Activated CD8-positive, alpha-beta T cell treated with anti-CD3 and anti-CD28 coated beads for 36 hours (primary cell): ENCODE measurements at regions of chr1 and their contacts with region 1.

Region 1: DNA sequence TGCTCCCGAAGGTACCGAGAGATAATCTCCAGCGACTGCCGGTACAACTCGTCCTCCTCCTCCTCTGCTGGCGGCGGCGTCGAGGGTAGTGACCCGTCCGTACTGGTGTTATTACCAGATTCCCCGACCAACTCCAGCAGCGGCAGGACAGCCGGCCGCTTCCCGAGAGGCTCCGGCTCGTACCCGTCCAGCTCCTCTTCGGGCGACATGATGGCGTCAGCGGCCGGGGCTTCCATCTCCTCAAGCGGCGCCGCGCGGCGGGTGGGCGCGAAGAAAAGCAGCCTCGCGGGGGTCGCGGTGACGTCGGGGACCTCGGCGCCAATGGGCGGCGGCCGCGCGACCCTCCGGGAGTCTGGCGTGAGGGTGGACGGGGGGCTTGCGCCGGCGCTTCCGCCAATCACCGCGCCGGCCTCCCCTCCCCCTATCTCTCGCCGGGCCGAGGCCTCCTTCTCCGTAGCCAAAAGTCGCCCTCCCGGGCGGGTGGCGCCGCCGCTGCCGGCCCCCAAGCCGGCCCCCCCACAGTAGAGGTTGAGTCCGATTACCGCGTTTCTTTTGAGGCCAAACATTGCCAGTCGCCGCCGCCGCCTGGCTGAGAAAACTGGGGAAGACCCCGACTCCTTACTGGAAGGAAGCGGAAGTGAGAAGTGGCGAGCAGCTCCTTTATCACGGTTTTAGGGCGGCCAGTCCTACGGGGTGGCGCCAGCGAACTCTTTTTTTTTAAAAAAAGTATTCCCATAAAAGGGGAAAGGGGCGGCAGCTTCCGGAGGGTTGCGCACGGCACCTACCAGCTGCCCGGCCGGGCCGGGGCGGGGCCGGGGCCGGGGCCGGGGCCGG is at the start of gene MCL1:
- DNase-seq: peak; percentile 94
- ATAC-seq: peak; percentile 84
- H3K4me3 Mint-ChIP-seq: peak within 1 kb of the TSS; percentile 97
- H3K27ac Mint-ChIP-seq: peak within 1 kb of the TSS; percentile 97
- H3K4me1 Mint-ChIP-seq: peaks cover 29% of the 10 kb centered on the region
- H3K27me3 Mint-ChIP-seq: no peaks in the 10 kb centered on the region
- CTCF ChIP-seq: no peak
- total RNA-seq, gene MCL1: 207 TPM

Region 2: GRCh38 chr1:150567717-150568593 is 11.2 kb before region 1 on chr1:
- CTCF ChIA-PET with region 1: interaction called, 237 read pairs
- POLR2A ChIA-PET with region 1: interaction called, 542 read pairs
- intact Hi-C with region 1: loop called (anchors 2 kb)
- DNase-seq: peak; percentile 68
- ATAC-seq: peak; percentile 22
- H3K4me3 Mint-ChIP-seq: peak overlapping the region; percentile 62
- H3K27ac Mint-ChIP-seq: peak overlapping the region; percentile 97
- H3K4me1 Mint-ChIP-seq: peaks cover 84% of the 10 kb centered on the region
- H3K27me3 Mint-ChIP-seq: no peaks in the 10 kb centered on the region
- CTCF ChIP-seq: no peak

Region 3: DNA sequence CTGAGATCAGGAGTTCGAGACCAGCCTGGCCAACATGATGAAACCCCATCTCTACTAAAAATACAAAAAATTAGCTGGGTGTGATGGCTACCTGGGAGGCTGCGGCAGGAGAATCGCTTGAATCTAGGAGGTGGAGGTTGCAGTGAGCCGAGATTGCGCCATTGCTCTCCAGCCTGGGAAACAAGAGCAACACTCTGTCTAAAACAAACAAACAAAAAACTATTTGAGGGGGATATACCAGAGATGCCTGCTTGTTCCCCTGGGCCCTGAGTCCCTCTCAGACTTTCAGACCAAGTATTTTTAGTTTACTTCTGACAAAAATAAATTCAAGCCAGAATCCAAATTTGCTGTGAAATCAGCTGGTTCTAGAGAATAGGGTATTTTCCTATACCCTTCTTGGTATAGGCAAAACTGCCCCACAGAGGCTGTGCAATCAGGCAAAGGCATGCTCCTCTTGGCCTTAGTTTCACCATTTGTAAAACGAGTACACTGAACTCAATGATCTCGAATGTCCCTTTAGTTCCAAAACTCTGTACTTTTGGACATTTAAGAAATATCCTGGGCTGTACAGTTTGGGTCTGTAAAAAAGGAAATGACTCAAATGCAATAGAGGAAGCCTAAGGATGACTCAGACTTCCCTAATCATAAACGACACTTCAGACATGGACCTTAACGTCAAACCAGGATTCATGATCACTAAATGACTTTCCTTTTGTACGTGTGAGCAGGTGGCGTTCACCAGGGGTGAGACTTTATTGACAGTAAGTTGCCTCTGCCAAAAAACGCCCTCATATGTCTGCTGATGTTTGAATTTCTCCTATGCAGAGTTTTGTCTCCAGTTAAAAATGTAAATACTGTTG is 34.1 kb after region 1 on chr1:
- CTCF ChIA-PET with region 1: interaction called, 6 read pairs
- POLR2A ChIA-PET with region 1: interaction called, 678 read pairs
- intact Hi-C with region 1: loop called (anchors 5 kb)
- DNase-seq: peak; percentile 83
- ATAC-seq: peak; percentile 62
- H3K4me3 Mint-ChIP-seq: peak overlapping the region; percentile 45
- H3K27ac Mint-ChIP-seq: peak overlapping the region; percentile 91
- H3K4me1 Mint-ChIP-seq: peaks cover 62% of the 10 kb centered on the region
- H3K27me3 Mint-ChIP-seq: no peaks in the 10 kb centered on the region
- CTCF ChIP-seq: no peak

Region 4: DNA sequence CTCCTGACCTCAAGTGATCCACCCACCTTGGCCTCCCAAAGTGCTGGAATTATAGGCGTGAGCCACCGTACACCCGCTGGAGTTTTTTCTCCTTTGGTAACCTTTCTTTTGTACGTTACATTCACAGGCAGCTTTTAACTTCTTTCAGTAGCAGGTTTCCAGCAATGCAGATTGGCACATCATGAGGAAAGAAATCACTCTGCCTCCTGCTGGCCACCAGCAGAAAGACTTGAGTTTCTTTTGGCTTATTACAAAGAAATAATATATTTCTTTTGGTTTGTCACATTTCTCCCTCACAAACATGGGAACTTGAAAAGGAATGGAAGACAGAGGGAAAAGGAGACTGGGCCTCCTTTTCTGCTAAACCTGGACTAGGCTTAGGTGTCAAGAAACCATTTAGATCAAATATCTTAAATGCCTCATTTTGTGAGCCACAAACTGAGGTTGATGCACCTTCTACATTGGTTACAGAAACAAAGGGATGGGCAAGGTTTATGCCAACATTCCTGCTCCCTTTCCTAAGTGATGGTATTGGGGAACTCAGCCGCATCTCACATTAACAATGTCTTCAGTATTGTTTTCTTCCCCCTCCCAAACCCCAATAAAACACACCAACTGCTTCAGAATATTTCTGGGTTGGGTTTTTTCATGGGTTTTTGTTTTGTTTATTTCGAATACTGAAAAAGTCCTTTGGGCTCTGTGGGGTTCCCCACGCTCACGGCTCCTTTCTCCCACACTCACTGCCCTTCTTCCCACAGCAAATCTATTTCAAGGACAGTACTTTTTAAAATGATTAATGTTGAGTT is 42.5 kb after region 1 on chr1:
- CTCF ChIA-PET with region 1: interaction called, 11 read pairs
- POLR2A ChIA-PET with region 1: interaction called, 678 read pairs
- intact Hi-C with region 1: no loop called
- DNase-seq: peak; percentile 77
- ATAC-seq: peak; percentile 53
- H3K4me3 Mint-ChIP-seq: no peak overlapping the region
- H3K27ac Mint-ChIP-seq: peak overlapping the region; percentile 76
- H3K4me1 Mint-ChIP-seq: peaks cover 65% of the 10 kb centered on the region
- H3K27me3 Mint-ChIP-seq: no peaks in the 10 kb centered on the region
- CTCF ChIP-seq: peak; percentile 83

Region 5: GRCh38 chr1:150629115-150629928 is 50.1 kb after region 1 on chr1 and contains the start of gene ENSA:
- CTCF ChIA-PET with region 1: interaction called, 4 read pairs
- POLR2A ChIA-PET with region 1: interaction called, 678 read pairs
- intact Hi-C with region 1: no loop called
- DNase-seq: peak; percentile 98
- ATAC-seq: peak; percentile 89
- H3K4me3 Mint-ChIP-seq: no peak within 1 kb of the TSS
- H3K27ac Mint-ChIP-seq: no peak within 1 kb of the TSS
- H3K4me1 Mint-ChIP-seq: peaks cover 47% of the 10 kb centered on the region
- H3K27me3 Mint-ChIP-seq: no peaks in the 10 kb centered on the region
- CTCF ChIP-seq: no peak
- total RNA-seq, gene ENSA: 177 to 182 TPM